Activated naive CD4-positive, alpha-beta T cell treated with anti-CD3 and anti-CD28 coated beads for 36 hours (primary cell): ENCODE measurements at regions of chr5 and their contacts with region 1.

Region 1: DNA sequence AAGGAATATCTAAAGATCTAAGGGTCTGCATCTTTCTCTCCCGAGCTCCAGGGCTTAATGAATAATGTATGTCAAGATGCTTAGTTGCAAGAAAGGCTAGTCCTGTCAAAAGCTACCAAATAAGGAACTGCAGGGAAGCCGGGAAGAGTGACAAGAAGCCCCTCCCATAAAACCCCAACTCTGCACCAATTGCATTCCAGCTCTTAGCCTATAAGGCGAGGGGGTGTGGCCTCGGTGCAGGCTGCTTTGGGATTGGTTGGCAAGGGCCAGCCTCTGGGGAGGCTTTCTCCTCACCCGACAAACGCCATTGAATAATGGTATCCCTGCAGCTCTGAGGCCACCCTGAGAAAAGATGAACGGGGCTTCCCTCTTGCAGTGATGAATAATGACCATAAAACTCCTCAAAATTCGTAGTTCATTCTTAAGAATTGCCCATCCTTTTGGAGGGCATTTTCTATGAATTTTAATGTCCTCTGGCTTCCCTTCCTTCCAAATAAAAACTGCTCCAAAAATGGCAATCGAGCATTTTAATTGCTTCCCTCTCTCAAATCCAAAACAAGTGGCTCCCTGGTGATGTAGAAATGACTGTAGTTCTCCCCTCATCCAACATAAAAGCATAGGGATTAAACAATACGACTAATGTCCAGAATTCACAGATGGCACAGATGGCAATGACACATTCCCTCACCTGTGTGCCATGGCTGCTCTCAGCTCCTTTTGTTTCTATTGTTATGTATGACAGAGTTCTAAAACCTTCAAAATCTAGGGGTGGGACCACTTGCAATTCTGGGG is 417.1 kb downstream of the RAB3C start:
- DNase-seq: no peak
- H3K4me3 Mint-ChIP-seq: no peak overlapping the region
- H3K27ac Mint-ChIP-seq: no peak overlapping the region
- H3K4me1 Mint-ChIP-seq: peaks cover 52% of the 10 kb centered on the region
- H3K27me3 Mint-ChIP-seq: no peaks in the 10 kb centered on the region

Region 2: DNA sequence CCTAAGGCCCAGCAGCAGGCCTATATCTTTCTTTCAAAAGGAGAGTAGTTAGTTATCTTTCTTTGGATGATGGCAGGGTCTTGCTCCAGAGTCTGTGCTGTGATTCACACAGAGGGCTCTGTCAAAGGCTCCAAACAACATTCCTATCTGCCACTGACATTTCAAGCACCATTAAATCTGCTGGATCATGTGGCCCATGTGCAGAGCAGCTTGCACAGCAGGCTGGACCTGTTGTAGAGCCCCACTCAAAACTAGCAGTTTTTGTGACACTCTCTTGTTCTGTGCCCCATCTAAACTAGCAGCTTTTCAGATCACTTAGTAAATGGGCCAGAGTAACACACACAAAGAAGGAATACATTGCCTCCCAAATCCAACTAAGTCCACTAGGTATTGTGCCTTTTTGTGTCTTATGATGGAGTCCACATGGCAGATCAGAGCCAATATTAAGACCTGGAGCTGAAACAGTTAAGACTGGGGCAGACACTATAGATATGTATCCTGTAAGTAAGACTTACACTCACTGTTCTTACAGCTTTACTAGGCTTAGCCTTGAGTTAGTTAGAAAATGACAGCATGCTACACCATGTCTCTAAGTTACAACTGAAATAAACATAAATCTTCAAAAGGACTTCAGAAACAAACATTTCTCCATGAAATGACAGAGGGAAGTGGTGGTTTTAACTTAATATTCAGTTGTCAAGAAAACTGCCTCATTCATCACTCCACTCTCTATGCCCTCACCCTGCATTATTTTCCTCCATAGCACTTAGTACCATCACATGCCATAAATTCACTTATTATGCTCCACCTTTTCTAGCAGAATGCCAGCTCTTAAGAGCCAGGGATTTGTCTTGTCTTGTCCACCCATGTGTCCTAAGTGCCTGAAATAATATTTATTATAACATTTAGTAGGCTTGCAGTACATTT is 16.2 kb before region 1 on chr5:
- CTCF ChIA-PET with region 1: no interaction called
- intact Hi-C with region 1: loop called (anchors 1 kb)
- DNase-seq: no peak
- H3K4me3 Mint-ChIP-seq: no peak overlapping the region
- H3K27ac Mint-ChIP-seq: no peak overlapping the region
- H3K4me1 Mint-ChIP-seq: no peaks in the 10 kb centered on the region
- H3K27me3 Mint-ChIP-seq: no peaks in the 10 kb centered on the region

Region 3: DNA sequence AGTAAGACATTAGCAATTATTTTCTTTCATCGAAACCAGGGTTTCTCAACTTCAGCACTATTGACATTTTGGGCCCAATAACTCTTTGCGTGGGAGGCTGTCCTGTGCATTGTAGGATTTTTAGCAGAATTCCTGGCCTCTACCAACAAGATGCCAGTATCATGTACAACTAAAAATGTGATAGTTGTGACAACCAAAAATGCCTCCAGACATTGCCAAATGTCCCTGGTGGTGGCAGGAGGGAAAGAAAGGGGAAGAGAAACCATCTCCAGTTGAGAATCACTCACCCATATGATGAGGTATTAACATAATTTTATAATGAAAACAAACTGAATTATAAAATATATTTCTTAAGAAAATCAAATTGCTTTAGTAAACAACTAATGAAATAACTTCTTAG is 11.1 kb before region 1 on chr5:
- CTCF ChIA-PET with region 1: no interaction called
- intact Hi-C with region 1: loop called (anchors 1 kb)
- DNase-seq: no peak
- H3K4me3 Mint-ChIP-seq: no peak overlapping the region
- H3K27ac Mint-ChIP-seq: no peak overlapping the region
- H3K4me1 Mint-ChIP-seq: peaks cover 4% of the 10 kb centered on the region
- H3K27me3 Mint-ChIP-seq: no peaks in the 10 kb centered on the region